ENCODE measurements at regions of chr2 and their contacts with region 1.

Region 1: GRCh38 chr2:217785544-217786045 is 217.2 kb downstream of the TNS1 start:
- ATAC-seq: peak; percentile 73 to 96 (median 86)
- H3K4me3 ChIP-seq: no peak overlapping the region
- H3K27ac ChIP-seq: no peak overlapping the region
- H3K4me1 ChIP-seq: no peaks in the 10 kb centered on the region

Region 2: GRCh38 chr2:217886720-217887309 is 101.2 kb after region 1 on chr2:
- in situ Hi-C with region 1: loop called in 6 of 9 experiments (anchors 10 to 25 kb)
- ATAC-seq: peak; percentile 11 to 87 (median 69)
- H3K4me3 ChIP-seq: no peak overlapping the region
- H3K27ac ChIP-seq: no peak overlapping the region
- H3K4me1 ChIP-seq: no peaks in the 10 kb centered on the region

Region 3: DNA sequence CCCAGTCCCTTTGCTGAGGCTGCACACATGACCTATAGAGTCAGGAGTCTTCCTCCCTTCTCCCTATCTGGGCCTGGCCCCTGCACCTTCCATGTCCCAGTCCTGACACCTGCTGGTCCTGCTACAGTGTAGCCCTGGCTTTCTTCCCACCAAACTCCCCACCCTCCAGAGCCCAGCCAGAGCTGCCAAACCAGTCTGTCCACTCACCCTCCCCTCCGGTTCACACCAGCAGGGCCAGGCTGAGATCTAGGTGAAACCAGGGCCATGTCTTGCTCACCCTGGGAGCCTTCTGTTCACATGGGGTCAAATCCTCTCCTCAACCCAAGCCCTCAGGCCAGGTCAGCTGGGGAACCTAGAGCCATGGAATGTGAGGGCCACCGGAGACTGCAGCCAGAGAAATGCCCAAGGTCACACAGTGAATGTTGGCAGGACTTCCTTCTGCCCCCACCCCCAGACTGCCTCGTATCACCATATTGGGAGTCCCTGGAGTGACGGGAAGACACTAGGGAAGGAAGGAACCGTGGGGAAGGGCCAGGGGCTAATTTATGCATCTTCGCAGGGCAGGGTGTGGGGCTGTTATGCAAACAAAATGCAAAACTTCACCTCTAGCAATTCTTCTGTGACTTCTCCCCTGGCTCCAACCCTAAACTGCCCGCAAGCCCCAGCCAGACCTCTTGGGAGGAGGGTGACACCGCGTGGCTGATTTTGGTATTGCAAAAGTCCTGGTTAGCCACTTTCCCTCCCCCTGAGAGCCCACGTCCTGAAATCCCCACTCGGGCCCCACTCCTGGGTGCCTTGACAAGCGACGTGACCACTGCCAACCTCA is 202.6 kb after region 1 on chr2:
- in situ Hi-C with region 1: loop called in 4 of 9 experiments (anchors 5 to 25 kb)
- ATAC-seq: peak; percentile 74 to 94 (median 77)
- H3K4me3 ChIP-seq: no peak overlapping the region
- H3K27ac ChIP-seq: no peak overlapping the region
- H3K4me1 ChIP-seq: no peaks in the 10 kb centered on the region

Region 4: GRCh38 chr2:218010140-218010983 is 224.8 kb after region 1 on chr2:
- in situ Hi-C with region 1: loop called in 1 of 9 experiments (anchors 25 kb)
- ATAC-seq: peak; percentile 79 to 96 (median 84)
- H3K4me3 ChIP-seq: peak overlapping the region; percentile 33 to 44 (median 37)
- H3K27ac ChIP-seq: peak overlapping the region; percentile 50 to 68
- H3K4me1 ChIP-seq: peaks cover 36 to 49% of the 10 kb centered on the region in 2 donors

Region 5: DNA sequence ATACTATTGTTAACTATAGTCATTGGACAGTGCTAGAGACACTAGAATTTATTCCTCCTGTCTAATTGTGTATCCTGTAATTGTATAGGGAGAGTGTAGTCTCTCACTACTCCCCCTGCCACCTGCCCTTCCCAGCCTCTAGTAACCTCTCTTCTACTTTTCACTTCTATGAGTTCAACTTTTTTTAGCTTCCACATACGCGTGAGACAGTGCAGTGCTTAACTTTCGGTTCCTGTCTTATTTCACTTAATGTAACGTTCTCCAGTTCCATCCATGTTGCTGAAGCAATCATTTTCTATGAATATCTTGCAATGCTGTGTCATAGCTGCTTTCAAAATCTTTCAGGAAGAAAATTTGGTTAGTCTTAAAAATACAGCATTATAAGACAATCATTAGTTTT is 260.6 kb after region 1 on chr2:
- in situ Hi-C with region 1: loop called in 3 of 9 experiments (anchors 25 kb)
- ATAC-seq: no peak
- H3K4me3 ChIP-seq: no peak overlapping the region
- H3K27ac ChIP-seq: no peak overlapping the region
- H3K4me1 ChIP-seq: no peaks in the 10 kb centered on the region

Region 6: GRCh38 chr2:218074031-218074430 is 288.4 kb after region 1 on chr2:
- in situ Hi-C with region 1: loop called in 1 of 9 experiments (anchors 25 kb)
- ATAC-seq: peak in 3 of 8 experiments; percentile 16 to 58 (median 23)
- H3K4me3 ChIP-seq: no peak overlapping the region
- H3K27ac ChIP-seq: no peak overlapping the region
- H3K4me1 ChIP-seq: peaks cover 0 to 1% of the 10 kb centered on the region in 2 donors